PC-9 (cell line): ENCODE measurements at regions of chr17 and their contacts with region 1.

Region 1: DNA sequence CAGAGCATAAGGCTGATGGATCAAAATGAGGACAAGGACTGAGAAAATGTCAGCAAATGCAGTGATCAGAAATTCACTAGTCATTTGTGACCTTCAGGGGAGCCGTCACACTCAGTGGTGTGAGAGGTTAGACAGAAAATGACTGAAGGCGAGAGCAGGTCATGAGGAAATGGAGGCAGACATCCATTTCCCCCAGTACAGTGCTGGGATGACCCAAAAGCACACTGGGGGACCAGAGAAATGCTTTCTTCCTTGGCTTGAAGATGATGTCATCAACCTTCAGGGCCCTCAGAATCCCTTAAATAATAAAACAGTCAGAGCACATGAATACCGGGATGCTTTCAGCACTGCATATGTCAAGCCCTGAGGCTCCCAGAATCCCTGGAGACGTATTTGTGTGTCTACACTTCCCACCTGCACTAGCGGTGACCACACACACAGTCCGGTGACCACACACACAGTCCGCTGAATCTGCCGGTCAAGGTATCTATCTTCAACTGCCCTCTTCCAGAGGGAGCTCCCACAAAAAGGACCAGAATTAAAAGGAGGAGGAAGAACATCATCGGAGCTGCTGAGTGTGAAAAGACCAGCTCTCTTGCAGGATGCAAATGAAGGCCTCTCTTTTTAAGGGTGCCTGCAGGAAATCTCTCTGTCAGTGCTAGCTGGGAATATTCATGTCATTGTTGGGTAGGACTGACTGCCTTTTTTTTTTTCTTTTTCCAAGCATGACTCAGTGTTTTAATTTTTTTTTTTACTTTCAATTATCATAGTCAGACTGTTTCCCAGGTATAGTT is 8.2 kb downstream of the UBE2O start:
- DNase-seq: no peak
- H3K4me3 ChIP-seq: no peak overlapping the region
- H3K27ac ChIP-seq: peak overlapping the region; percentile 98
- H3K4me1 ChIP-seq: peaks cover 44% of the 10 kb centered on the region
- H3K27me3 ChIP-seq: no peaks in the 10 kb centered on the region
- CTCF ChIP-seq: no peak

Region 2: GRCh38 chr17:76397687-76398487 is 46.8 kb before region 1 on chr17:
- CTCF ChIA-PET with region 1: no interaction called
- POLR2A ChIA-PET with region 1: interaction called, 5 read pairs
- intact Hi-C with region 1: loop called (anchors 1 kb)
- DNase-seq: peak; percentile 59 to 84
- H3K4me3 ChIP-seq: no peak overlapping the region
- H3K27ac ChIP-seq: no peak overlapping the region
- H3K4me1 ChIP-seq: no peaks in the 10 kb centered on the region
- H3K27me3 ChIP-seq: no peaks in the 10 kb centered on the region
- CTCF ChIP-seq: peak; percentile 89

Region 3: DNA sequence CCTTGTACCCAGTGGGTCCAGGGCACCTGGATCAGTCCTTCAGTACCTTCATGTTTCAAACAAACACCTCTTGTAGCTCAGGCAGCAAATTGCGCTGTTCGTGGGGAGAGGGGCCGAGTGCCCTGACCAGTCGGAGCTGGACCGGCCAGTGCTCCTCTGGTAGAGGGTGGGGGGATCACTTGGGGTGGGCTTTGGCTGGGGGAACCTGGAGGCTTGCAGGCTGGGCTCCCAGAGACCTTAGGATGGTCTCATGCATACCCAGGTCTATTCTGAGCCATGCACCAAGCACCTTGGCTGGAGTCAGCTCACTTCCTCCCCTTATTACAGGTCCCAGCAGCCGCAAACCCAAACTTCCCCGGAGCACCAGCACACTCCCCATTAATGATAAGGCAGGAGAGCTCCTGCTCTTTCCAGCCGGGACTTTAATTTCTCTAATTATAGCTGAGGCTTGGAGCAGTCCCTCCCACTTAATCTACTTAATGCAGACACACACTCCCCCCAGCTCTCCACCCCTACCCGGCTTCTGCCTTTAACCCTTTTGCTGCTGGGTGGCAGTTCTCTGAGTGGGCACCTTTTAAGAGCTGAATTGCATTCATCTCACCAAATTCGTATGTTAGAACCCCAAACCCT is 397.2 kb after region 1 on chr17:
- CTCF ChIA-PET with region 1: no interaction called
- POLR2A ChIA-PET with region 1: no interaction called
- intact Hi-C with region 1: no loop called
- DNase-seq: no peak
- H3K4me3 ChIP-seq: no peak overlapping the region
- H3K27ac ChIP-seq: no peak overlapping the region
- H3K4me1 ChIP-seq: peaks cover 4% of the 10 kb centered on the region; the same call in 1 of the 2 replicates
- H3K27me3 ChIP-seq: no peaks in the 10 kb centered on the region
- CTCF ChIP-seq: no peak